ENCODE measurements at regions of chr3 and their contacts with region 1.

Region 1: DNA sequence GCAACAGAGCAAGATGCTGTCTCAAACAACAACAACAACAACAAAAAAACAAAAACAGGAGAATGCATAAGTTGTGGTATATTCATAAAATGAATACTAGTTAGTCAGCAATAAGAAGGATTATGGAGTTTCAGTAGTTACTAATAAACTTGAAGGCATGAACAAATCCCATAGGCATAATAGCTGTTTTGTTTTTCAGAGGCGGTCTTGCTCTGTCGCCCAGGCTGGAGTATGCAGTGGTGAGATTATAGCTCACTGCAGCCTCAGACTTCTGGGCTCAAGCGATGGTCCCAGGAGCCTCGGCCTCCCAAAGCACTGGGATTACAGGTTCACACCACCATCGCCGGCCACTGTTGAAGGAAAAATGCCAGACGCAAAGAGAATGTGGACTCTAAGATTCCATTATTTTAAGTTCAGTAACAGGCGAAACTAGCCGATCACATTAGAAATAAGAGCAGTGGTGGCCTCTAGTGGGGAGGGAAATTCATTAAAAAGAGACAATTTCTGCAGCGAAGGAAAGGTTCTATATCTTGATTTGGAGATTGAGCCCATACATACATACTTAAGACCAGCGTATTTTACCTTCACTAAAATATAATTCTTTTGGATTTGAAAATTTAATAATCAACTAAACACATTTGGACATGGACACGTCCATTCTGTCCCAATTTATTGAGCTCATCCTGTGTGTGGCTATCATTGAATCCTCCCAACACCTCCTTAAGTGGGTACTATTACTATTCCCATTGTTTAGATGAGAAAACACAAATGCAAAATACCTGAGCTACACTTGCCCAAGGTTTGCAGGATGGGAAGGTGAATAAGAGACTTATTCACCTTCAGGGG is 27.4 kb upstream of the HDAC11 start:
- DNase-seq: peak; percentile 58 to 66 (median 63)
- H3K4me3 ChIP-seq: peak overlapping the region in 1 of 2 donors; percentile 72
- H3K4me3 Mint-ChIP-seq: peak overlapping the region; percentile 93 to 98 (median 98)
- H3K27ac ChIP-seq: peak overlapping the region; percentile 60
- H3K27ac Mint-ChIP-seq: peak overlapping the region; percentile 86 to 97 (median 96)
- H3K4me1 ChIP-seq: peaks cover 19% of the 10 kb centered on the region
- H3K4me1 Mint-ChIP-seq: peaks cover 10 to 25% (median 17%) of the 10 kb centered on the region in 4 donors
- H3K27me3 ChIP-seq: no peaks in the 10 kb centered on the region
- H3K27me3 Mint-ChIP-seq: no peaks in the 10 kb centered on the region

Region 2: GRCh38 chr3:13332158-13332557 is 120.6 kb before region 1 on chr3:
- CTCF ChIA-PET with region 1: interaction called, 15 read pairs
- POLR2A ChIA-PET with region 1: interaction called, 3 read pairs
- intact Hi-C with region 1: no loop called
- DNase-seq: peak in 1 of 5 donors; percentile 7
- H3K4me3 ChIP-seq: no peak overlapping the region
- H3K4me3 Mint-ChIP-seq: no peak overlapping the region
- H3K27ac ChIP-seq: no peak overlapping the region
- H3K27ac Mint-ChIP-seq: peak overlapping the region in 6 of 7 donors; percentile 64 to 87 (median 81)
- H3K4me1 ChIP-seq: peaks cover 4% of the 10 kb centered on the region
- H3K4me1 Mint-ChIP-seq: peaks cover 2 to 8% (median 4%) of the 10 kb centered on the region in 4 donors
- H3K27me3 ChIP-seq: no peaks in the 10 kb centered on the region
- H3K27me3 Mint-ChIP-seq: no peaks in the 10 kb centered on the region

Region 3: GRCh38 chr3:13371100-13372075 is 81.3 kb before region 1 on chr3:
- CTCF ChIA-PET with region 1: interaction called, 10 read pairs
- POLR2A ChIA-PET with region 1: no interaction called
- intact Hi-C with region 1: no loop called
- DNase-seq: no peak
- H3K4me3 ChIP-seq: no peak overlapping the region
- H3K4me3 Mint-ChIP-seq: no peak overlapping the region
- H3K27ac ChIP-seq: no peak overlapping the region
- H3K27ac Mint-ChIP-seq: peak overlapping the region in 5 of 7 donors; percentile 3 to 83 (median 63)
- H3K4me1 ChIP-seq: no peaks in the 10 kb centered on the region
- H3K4me1 Mint-ChIP-seq: peaks cover 0 to 2% (median under 1%) of the 10 kb centered on the region in 4 donors
- H3K27me3 ChIP-seq: no peaks in the 10 kb centered on the region
- H3K27me3 Mint-ChIP-seq: no peaks in the 10 kb centered on the region

Region 4: GRCh38 chr3:13405614-13406013 is 47.1 kb before region 1 on chr3:
- CTCF ChIA-PET with region 1: interaction called, 49 read pairs
- POLR2A ChIA-PET with region 1: interaction called, 6 read pairs
- intact Hi-C with region 1: no loop called
- DNase-seq: no peak
- H3K4me3 ChIP-seq: no peak overlapping the region
- H3K4me3 Mint-ChIP-seq: peak overlapping the region in 1 of 8 donors; percentile 1
- H3K27ac ChIP-seq: no peak overlapping the region
- H3K27ac Mint-ChIP-seq: peak overlapping the region; percentile 8 to 86 (median 65)
- H3K4me1 ChIP-seq: peaks cover 36% of the 10 kb centered on the region
- H3K4me1 Mint-ChIP-seq: peaks cover 31 to 61% (median 45%) of the 10 kb centered on the region in 4 donors
- H3K27me3 ChIP-seq: no peaks in the 10 kb centered on the region
- H3K27me3 Mint-ChIP-seq: no peaks in the 10 kb centered on the region

Region 5: GRCh38 chr3:13427662-13428603 is 24.8 kb before region 1 on chr3:
- CTCF ChIA-PET with region 1: interaction called, 54 read pairs
- POLR2A ChIA-PET with region 1: interaction called, 39 read pairs
- intact Hi-C with region 1: loop called (anchors 1 kb)
- DNase-seq: peak; percentile 57 to 75 (median 64)
- H3K4me3 ChIP-seq: peak overlapping the region in 1 of 2 donors; percentile 7
- H3K4me3 Mint-ChIP-seq: peak overlapping the region; percentile 38 to 84 (median 68)
- H3K27ac ChIP-seq: peak overlapping the region; percentile 43
- H3K27ac Mint-ChIP-seq: peak overlapping the region; percentile 81 to 95 (median 88)
- H3K4me1 ChIP-seq: peaks cover 47% of the 10 kb centered on the region
- H3K4me1 Mint-ChIP-seq: peaks cover 19 to 58% (median 38%) of the 10 kb centered on the region in 4 donors
- H3K27me3 ChIP-seq: no peaks in the 10 kb centered on the region
- H3K27me3 Mint-ChIP-seq: no peaks in the 10 kb centered on the region

Region 6: DNA sequence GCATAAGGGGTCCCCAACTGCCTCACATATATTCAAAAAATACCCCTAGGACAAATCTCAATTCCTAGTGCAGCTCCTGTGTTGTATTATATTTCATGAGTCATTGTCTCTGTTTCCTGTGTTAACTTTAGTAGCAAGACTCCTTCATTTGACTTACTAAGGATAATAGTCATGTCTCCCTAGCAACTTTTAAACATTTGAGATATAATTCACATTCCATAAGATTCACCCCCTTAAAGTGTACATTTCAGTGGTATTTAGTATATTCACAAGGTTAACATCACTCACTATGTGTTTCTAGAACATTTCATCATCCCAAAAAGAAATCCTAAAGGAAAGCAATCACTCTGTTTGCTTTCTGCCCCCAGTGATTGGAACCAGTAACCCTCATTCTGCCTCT is 548.4 kb after region 1 on chr3:
- CTCF ChIA-PET with region 1: no interaction called
- POLR2A ChIA-PET with region 1: no interaction called
- intact Hi-C with region 1: no loop called
- DNase-seq: no peak
- H3K4me3 ChIP-seq: no peak overlapping the region
- H3K4me3 Mint-ChIP-seq: no peak overlapping the region
- H3K27ac ChIP-seq: no peak overlapping the region
- H3K27ac Mint-ChIP-seq: no peak overlapping the region
- H3K4me1 ChIP-seq: no peaks in the 10 kb centered on the region
- H3K4me1 Mint-ChIP-seq: no peaks in the 10 kb centered on the region
- H3K27me3 ChIP-seq: no peaks in the 10 kb centered on the region
- H3K27me3 Mint-ChIP-seq: peaks cover 9 to 10% of the 10 kb centered on the region in 2 donors

Measured in CD4-positive, alpha-beta memory T cell (primary cell).